Activated CD4-positive, alpha-beta memory T cell treated with anti-CD3 and anti-CD28 coated beads for 36 hours (primary cell): ENCODE measurements at regions of chr1 and their contacts with region 1.

Region 1: DNA sequence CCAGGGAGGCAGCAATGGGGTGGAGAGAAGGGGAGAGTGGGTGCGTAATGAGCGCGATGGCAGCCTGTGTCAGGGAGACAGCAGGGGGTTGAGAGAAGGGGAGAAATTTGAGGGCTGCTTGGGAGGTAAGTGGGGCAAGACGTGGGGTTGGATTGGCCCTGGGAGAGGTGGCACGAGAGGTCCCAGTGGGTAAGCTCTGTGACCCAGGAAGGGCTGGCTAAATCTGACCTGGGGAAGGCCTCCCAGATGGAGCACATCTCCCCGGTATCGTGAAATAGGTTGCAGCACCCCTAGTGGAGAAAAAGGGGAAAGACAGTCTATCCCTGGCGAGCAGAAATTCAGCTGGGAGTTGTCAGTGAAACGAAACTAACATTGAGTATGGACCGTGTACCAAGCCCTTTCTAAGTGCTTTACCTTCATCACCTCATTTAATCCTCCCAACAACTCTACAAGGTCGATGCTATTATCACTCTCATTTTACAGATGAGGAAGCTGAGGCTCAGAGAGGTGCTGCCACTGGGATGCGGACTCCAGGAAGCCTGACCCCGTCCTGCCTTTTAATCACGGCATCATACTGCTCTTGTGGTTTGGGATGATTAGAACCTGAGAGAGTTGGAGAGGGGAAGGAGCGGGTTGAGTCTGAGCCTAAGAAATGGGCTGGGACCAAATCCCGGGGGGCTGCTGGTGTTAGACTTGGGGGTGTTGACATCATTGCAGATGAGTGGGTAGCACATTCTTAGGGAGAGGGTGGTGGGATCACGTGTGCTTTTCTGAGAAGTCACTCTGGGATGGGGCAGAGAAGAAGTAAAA is 56.6 kb upstream of the RPL11 start:
- DNase-seq: peak; percentile 70
- H3K4me3 Mint-ChIP-seq: peak overlapping the region; percentile 35
- H3K27ac Mint-ChIP-seq: peak overlapping the region; percentile 36
- H3K4me1 Mint-ChIP-seq: peaks cover 22% of the 10 kb centered on the region
- H3K27me3 Mint-ChIP-seq: peaks cover 2% of the 10 kb centered on the region

Region 2: DNA sequence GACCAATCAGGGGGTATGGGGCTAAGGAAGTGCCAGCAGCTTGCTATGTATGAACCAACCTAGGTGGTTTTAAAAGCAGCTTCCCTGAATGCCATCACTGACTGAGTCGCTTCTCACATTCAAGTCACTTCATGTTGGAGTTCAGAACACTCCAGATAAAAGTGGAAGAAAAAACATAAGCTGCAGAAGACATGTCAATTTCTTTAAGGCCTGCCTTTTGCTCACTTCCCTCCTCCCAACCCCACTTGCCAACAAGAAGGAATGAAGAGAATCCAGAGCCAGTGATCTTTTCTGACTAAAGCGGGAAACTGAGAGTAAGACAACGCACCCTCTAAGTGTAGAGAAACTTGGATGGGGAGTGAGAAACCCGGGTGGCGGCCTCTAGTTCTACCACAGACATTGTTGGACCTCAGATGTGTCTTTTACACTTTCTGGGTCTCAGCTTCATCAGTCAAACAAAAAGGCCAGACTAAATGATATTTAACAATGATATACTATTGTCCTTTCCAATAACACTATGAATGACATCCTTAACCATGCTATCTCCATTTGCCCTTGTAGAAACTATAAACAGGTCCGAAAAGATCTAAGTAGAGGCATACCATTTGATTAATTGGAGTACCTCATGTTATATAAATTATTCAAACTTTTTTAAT is 520.5 kb before region 1 on chr1:
- CTCF ChIA-PET with region 1: no interaction called
- POLR2A ChIA-PET with region 1: no interaction called
- intact Hi-C with region 1: no loop called
- DNase-seq: no peak
- H3K4me3 Mint-ChIP-seq: no peak overlapping the region
- H3K27ac Mint-ChIP-seq: peak overlapping the region; percentile 23
- H3K4me1 Mint-ChIP-seq: peaks cover 77% of the 10 kb centered on the region
- H3K27me3 Mint-ChIP-seq: no peaks in the 10 kb centered on the region

Region 3: DNA sequence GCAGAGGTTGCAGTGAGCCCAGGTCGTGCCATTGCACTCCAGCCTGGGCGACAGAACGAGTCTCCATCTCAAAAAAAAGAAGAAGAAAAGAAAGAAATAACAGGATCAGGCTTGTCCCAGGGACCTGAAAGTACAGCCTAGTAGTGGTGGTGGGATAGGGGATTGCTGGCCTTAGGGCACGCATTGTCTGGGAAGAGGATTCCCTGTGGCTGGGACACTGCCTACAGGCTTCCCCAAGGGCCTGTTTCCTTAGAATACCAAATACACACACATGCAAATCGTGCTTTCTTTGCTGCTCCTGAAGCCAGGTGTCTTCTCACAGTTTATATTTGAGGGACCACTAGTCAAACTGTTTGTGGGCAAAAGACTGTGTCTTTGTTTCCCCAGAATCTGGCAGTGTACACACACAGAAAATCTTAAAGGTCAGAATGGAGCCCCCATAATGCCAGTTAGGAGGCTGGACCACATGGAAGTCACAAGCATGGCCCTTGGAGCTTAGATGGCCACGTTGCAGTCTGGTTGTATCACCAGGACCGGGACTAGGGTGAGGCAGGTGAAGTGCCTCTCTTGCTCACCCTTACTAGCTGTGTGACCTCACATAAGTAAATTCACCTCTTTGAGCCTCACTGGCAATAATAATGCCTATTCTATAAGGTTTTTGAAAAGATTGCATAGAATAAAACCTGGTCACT is 138.4 kb before region 1 on chr1:
- CTCF ChIA-PET with region 1: interaction called, 95 read pairs
- POLR2A ChIA-PET with region 1: no interaction called
- intact Hi-C with region 1: no loop called
- DNase-seq: no peak
- H3K4me3 Mint-ChIP-seq: no peak overlapping the region
- H3K27ac Mint-ChIP-seq: no peak overlapping the region
- H3K4me1 Mint-ChIP-seq: peaks cover 3% of the 10 kb centered on the region
- H3K27me3 Mint-ChIP-seq: no peaks in the 10 kb centered on the region

Region 4: DNA sequence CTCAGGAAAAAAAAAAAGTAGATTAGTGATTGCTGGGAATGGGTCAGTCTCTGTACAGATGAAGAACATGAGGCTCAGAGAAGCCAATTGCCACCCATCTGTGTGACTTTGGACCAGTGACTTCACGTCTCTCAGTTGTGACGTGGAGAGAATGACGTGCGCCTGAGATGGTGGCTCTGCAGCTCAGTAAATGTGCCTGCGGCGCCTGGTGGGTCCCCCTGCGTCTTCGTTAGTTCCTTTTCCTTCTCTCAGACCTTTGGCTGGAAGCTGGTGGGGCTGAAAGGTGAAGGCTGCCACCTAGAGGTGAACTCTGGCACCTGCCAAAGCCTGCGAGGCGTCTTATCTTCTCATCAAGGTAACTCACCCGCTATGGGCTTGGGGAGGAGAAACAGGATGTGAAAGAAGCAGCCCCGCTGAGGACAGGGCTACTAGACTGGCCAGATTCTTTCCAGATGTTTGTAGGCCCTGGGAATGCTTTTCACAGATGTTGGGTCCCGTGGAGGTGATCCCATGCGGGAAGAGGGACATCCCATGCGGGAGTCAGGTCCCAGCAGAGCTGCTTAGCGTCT is 95.3 kb before region 1 on chr1:
- CTCF ChIA-PET with region 1: interaction called, 913 read pairs
- POLR2A ChIA-PET with region 1: interaction called, 9 read pairs
- intact Hi-C with region 1: loop called (anchors 1 kb)
- DNase-seq: peak; percentile 96
- H3K4me3 Mint-ChIP-seq: peak overlapping the region; percentile 55
- H3K27ac Mint-ChIP-seq: peak overlapping the region; percentile 62
- H3K4me1 Mint-ChIP-seq: peaks cover 17% of the 10 kb centered on the region
- H3K27me3 Mint-ChIP-seq: no peaks in the 10 kb centered on the region

Region 5: DNA sequence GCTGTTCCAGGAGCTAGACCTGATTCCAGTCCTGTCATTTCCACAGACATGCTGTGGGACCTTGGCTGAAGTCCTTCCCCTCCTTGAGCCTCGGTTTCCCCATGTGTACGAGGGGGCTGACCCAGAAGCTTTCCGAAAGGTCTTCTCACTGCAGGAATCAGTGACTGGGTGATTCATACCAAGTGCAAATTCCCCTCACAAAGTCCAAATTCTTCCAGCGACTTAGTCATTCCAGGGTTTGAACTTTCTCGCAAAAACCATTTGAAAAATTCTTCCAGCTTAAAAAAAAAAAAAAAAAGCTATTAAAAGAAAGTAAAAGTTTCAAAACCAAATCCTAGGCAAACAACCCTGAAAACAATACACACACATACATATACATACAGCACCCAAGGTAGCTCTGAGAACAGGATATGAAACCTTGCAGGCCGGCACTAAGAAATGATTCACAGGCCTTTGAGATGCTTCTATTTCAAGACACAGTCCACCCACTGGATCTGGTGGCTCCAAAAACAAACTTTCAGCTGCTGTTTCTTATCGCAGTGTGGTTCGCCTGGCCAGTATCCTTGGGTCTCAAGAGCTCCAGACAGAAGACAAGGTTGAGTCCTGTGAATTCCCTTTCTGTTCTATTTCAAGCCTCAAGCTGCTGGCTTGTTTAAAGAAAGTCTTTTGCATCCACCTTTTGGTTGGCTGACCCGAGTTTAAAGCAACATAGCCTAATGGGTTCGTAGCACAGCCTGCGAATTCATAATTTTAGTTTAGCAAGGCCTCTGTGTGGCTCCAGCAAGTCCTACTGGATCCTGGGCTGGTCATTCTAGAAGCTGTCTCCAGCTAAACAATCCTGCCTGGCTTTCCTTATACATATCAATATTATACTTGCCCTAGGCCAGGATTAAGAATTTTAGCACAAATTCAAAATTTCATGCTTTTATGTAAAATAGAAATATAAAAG is 57.7 kb before region 1 on chr1:
- CTCF ChIA-PET with region 1: interaction called, 34 read pairs
- POLR2A ChIA-PET with region 1: no interaction called
- intact Hi-C with region 1: no loop called
- DNase-seq: peak; percentile 71
- H3K4me3 Mint-ChIP-seq: peak overlapping the region; percentile 4
- H3K27ac Mint-ChIP-seq: peak overlapping the region; percentile 55
- H3K4me1 Mint-ChIP-seq: peaks cover 27% of the 10 kb centered on the region
- H3K27me3 Mint-ChIP-seq: no peaks in the 10 kb centered on the region

Region 6: GRCh38 chr1:23613191-23614031 is 21.6 kb before region 1 on chr1:
- CTCF ChIA-PET with region 1: interaction called, 43 read pairs
- POLR2A ChIA-PET with region 1: no interaction called
- intact Hi-C with region 1: loop called (anchors 2 kb)
- DNase-seq: peak; percentile 86
- H3K4me3 Mint-ChIP-seq: peak overlapping the region; percentile 17
- H3K27ac Mint-ChIP-seq: peak overlapping the region; percentile 77
- H3K4me1 Mint-ChIP-seq: peaks cover 72% of the 10 kb centered on the region
- H3K27me3 Mint-ChIP-seq: no peaks in the 10 kb centered on the region

Region 7: DNA sequence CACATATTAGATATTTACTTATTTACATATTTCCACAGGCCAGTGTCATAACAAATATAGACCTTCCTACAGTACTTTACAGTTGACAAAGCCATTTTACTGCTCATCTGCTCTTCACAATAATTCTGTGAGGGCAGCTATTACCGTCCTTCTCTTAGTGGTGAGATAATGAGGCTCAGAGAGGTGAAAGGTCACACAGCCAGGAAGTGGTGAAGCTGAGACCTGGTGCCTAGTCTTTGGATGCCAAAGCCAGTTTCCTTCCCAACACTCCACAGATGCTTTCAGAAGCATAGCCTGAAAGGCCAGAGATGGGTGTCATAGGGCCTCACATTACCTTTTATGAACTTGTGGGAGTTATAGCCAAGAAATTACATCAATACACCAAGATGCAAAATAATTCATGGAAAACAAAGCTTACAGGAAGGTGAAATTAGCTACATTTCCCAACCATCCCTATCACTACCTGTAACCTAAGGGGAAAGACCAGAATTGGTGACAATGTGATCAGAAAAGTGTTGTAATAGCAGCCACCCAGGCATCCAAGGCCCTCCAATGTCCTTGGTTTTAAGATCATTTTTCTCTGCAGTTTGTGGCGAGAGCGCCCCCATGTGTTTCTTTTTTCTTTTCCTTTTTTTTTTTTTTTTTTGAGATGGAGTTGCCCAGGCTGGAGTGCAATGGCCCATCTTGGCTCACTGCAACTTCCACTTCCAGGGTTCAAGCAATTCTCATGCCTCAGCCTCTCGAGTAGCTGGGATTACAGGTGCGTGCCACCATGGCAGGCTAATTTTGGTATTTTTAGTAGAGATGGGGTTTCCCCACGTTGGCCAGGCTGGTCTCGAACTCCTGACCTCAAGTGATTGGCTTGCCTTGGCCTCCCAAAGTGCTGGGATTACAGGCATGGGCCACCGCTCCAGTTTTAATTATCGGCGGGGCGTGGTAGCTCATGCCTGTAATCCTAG is 30.1 kb after region 1 on chr1:
- CTCF ChIA-PET with region 1: interaction called, 10 read pairs
- POLR2A ChIA-PET with region 1: no interaction called
- intact Hi-C with region 1: no loop called
- DNase-seq: peak; percentile 31
- H3K4me3 Mint-ChIP-seq: no peak overlapping the region
- H3K27ac Mint-ChIP-seq: no peak overlapping the region
- H3K4me1 Mint-ChIP-seq: peaks cover 6% of the 10 kb centered on the region
- H3K27me3 Mint-ChIP-seq: no peaks in the 10 kb centered on the region

Region 8: DNA sequence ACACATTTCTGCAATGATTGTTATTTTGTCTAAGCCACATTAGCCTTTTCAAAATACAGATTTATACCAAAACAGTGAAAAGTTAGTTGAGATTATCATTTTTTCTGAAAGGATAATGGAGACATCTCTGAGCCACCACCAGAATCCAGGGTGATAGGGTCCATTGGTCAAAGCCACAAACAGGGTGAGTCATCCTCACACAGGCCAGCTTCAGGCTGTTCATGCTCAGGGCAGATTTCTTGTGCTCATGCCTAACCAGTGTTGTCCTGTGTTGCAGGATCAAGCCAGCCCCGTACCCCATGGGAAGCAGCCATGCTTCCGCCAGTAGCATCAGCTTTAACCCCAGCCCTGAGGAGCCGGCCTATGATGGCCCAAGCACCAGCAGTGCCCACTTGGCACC is 121.6 kb after region 1 on chr1:
- CTCF ChIA-PET with region 1: no interaction called
- POLR2A ChIA-PET with region 1: no interaction called
- intact Hi-C with region 1: no loop called
- DNase-seq: no peak
- H3K4me3 Mint-ChIP-seq: no peak overlapping the region
- H3K27ac Mint-ChIP-seq: no peak overlapping the region
- H3K4me1 Mint-ChIP-seq: no peaks in the 10 kb centered on the region
- H3K27me3 Mint-ChIP-seq: no peaks in the 10 kb centered on the region

Region 9: DNA sequence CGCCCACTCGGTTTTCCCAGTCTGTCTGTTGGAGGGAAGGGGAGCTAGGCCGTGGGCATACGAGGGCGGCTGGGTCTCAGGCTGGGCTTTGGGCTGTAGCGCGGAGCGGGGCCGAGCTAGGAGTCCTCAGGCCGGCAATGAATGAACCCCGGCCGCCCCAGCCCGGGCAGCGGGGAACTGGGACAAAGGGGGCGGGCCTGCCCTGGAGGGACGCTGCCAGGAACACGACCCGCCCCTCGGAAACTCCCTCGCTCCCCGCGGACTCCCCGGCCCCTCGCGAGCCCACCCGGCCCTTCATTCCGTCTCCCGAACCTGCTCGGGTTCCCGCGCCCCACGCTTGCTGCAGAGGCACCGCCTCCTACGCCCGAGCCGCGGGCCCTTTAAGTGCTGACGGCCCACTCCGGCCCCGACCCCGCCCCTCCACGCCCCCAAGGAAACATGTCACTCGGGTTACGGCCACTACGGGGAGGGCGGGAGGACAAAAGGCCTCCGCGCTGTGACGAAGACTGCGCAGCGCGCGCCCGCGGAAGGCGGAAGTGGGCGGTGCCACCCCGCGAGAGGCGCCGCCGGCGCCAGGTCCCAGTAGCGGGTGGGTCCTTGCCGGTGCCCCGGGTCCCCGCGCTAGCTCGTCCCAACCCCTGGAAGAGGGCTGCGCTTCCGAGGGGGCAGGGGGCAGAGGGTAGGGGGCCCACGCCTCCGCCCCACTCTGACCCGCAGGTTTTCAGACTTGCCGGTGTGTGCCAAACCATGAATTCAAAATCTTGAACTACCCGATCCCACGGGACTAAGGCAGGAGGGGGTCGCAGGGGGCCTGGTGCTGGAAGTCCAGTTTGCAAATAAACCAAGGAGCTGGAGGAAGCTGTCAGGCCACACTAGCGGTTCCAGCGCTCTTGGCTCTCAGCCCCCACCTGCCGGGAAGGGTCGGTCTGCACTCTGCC is 165.6 kb after region 1 on chr1 and contains the start of gene GALE:
- CTCF ChIA-PET with region 1: no interaction called
- POLR2A ChIA-PET with region 1: no interaction called
- intact Hi-C with region 1: no loop called
- DNase-seq: peak; percentile 98
- H3K4me3 Mint-ChIP-seq: peak within 1 kb of the TSS; percentile 94
- H3K27ac Mint-ChIP-seq: peak within 1 kb of the TSS; percentile 90
- H3K4me1 Mint-ChIP-seq: peaks cover 14% of the 10 kb centered on the region
- H3K27me3 Mint-ChIP-seq: no peaks in the 10 kb centered on the region
- total RNA-seq, gene GALE: 49.4 to 54.9 TPM

Region 10: DNA sequence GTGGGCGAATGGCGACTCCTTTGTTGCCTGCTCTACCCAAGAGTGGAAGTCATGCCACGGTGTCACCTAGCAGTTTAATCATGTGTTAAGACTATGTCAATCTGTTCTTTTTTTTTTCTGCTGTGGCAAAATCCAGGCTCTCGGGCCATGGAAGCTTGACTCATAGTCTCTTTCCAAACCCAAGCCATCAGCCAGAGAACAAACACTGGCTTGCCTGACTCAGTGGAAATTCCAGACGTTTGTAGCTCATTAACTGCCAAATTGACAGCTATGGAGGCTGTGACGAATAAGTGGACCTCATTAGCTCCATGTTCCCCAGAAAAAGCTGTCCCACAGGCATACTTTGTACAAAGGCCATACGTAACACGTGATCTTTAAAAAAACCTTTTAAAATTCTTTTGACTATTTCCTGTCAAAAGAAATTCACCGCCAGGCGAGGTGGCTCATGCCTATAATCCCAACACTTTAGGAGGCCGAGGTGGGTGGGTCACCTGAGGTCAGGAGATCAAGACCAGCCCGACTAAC is 316.6 kb after region 1 on chr1:
- CTCF ChIA-PET with region 1: no interaction called
- POLR2A ChIA-PET with region 1: no interaction called
- intact Hi-C with region 1: no loop called
- DNase-seq: no peak
- H3K4me3 Mint-ChIP-seq: no peak overlapping the region
- H3K27ac Mint-ChIP-seq: no peak overlapping the region
- H3K4me1 Mint-ChIP-seq: peaks cover 16% of the 10 kb centered on the region
- H3K27me3 Mint-ChIP-seq: peaks cover 1% of the 10 kb centered on the region